PC-9 (cell line): ENCODE measurements at regions of chr2 and their contacts with region 1.

Region 1: DNA sequence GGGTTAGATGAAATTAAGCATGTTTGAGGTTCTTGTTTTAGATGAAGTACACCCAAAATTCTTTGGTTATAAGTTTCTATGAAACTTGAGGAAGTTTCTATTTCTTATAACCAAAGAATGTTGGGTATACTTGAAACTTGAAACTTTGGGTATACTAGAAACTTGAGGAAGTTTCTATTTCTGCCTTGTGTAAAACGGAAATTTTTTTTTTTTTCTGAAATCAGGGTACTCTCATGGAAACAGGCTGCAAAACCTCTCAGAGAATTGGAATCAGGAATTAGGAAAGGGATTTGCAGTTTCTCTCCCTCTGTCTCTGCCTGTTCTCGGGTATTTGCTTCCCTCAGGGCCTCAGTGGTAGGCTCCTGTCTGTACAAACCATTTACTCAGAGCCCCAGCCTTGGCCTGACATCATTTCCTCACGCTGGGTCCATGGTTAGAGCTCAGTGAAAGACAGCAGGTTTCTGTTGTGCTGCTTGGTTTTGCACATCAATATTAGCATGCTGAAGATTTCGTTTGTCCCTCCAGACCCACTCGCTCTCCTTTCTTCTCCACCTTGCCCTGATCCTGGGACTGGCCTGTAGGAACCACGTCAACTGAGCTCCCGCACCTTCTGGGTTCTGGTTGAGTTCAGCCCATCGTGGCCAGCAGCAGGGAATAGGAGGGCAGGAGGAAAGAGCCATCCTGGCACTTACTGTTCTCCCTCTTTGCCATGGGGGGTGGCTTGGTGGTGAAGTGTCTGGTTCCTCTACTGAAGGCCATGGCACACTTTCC is 106.4 kb downstream of the POLR1A start:
- DNase-seq: no peak
- H3K4me3 ChIP-seq: no peak overlapping the region
- H3K27ac ChIP-seq: 0 out of 2 replicates have a peak overlapping the region, but pooled peaks have one; percentile 14
- H3K4me1 ChIP-seq: 0 out of 2 replicates have a peak, but pooled peaks cover 11% of the 10 kb centered on the region
- H3K27me3 ChIP-seq: no peaks in the 10 kb centered on the region
- CTCF ChIP-seq: no peak

Region 2: DNA sequence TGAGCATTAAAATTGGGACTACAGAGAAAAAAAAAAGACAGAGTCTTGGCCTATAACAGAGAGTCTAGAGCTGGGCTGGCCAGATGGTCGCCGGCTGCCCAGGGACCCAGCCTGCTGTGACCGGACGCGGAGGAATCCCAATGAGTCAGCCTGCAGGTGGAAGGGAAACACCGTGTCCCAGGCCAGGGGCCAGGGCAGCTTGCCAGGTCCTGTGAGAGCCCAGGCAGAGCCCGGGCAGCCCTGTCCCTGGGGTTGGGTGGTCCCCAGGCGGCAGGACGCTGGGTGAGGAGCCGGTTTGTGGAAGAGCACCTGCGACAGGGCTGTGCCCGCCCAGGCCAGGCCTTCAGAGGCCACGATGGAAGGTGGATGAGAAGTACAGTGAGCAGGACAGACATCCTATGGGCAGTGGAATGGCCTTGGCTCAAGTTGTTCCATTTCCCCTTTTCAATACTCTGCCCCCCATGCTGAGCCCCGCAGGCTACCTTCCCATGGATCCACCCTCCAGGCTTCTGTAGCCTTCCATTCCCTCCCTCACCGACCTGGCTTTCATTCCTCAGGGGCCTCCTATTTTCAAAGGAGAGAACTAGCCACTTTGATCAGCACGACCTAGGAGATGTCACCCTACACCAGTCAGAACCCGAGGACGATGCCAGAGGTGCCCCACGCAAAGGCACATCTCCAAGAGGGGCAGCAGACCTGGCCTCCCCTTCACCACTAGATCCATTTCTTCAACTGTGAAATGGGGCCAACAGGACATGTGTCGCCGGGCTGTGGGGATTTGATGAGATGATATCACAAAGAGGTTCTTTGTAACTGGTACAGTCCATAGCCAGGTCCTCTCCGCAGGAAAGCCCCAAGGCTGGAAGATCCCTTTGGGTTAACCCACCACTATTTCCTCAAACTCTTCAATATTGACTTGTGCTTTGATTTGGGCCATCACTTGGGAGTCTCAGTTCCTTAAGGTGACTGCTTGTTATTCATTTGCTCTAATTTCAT is 19.0 kb after region 1 on chr2:
- CTCF ChIA-PET with region 1: no interaction called
- POLR2A ChIA-PET with region 1: no interaction called
- intact Hi-C with region 1: loop called (anchors 2 kb)
- DNase-seq: peak; percentile 66 to 74
- H3K4me3 ChIP-seq: no peak overlapping the region
- H3K27ac ChIP-seq: no peak overlapping the region
- H3K4me1 ChIP-seq: peaks cover 18% of the 10 kb centered on the region
- H3K27me3 ChIP-seq: no peaks in the 10 kb centered on the region
- CTCF ChIP-seq: no peak